Activated naive CD8-positive, alpha-beta T cell treated with anti-CD3 and anti-CD28 coated beads, Interleukin-2, amount 10 ng/mL, durations not matched to agents 7 days and 5 days (primary cell): ENCODE measurements at regions of chr7 and their contacts with region 1.

Region 1: DNA sequence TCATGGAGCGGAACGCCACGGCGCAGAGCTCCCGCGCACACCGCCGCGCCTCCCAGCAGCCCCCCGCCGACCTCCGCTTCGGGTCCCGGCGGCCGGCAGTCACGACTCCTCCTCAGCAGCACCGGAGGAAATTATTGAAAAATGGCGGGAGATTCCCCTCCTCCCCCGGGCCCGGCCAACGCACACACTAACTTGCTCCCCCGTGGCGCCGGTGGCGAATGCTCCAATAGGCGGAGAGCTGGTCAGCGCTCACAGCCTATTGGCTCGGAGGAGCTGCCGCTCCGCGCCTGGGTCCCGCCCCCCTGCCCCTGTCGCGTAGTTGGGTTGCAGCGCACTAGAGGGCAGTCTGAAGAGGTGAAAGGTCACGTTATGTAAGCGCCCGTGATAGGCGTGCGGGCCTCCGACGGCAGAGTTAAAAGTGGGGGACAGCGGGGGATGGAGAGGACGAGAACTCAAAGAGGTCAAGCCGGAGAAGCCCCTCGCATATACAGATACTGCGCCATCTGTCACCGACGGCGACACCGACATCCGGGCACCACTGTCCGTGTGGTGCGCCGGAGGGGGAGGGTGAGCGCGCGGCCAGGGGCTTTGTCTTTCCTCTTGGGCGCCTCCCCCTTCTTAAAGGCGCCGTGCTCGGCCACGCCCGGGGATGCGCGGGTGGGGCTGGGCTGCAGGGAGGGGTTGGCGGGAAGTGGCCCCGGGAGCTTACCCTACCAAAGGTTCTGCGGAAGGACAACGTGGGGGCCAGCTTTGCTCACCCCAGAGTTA is at the start of gene BAZ1B:
- DNase-seq: peak; percentile 94
- ATAC-seq: peak; percentile 88
- H3K4me3 Mint-ChIP-seq: peak within 1 kb of the TSS; percentile 95
- H3K27ac Mint-ChIP-seq: peak within 1 kb of the TSS; percentile 99
- H3K4me1 Mint-ChIP-seq: peaks cover 54% of the 10 kb centered on the region
- H3K27me3 Mint-ChIP-seq: no peaks in the 10 kb centered on the region
- total RNA-seq, gene BAZ1B: 90.5 to 93.0 TPM

Region 2: GRCh38 chr7:73433924-73434700 is 88.2 kb before region 1 on chr7:
- POLR2A ChIA-PET with region 1: no interaction called
- DNase-seq: no peak
- ATAC-seq: peak; percentile 16
- H3K4me3 Mint-ChIP-seq: peak overlapping the region; percentile 37
- H3K27ac Mint-ChIP-seq: no peak overlapping the region
- H3K4me1 Mint-ChIP-seq: peaks cover 3% of the 10 kb centered on the region
- H3K27me3 Mint-ChIP-seq: peaks cover 12% of the 10 kb centered on the region

Region 3: DNA sequence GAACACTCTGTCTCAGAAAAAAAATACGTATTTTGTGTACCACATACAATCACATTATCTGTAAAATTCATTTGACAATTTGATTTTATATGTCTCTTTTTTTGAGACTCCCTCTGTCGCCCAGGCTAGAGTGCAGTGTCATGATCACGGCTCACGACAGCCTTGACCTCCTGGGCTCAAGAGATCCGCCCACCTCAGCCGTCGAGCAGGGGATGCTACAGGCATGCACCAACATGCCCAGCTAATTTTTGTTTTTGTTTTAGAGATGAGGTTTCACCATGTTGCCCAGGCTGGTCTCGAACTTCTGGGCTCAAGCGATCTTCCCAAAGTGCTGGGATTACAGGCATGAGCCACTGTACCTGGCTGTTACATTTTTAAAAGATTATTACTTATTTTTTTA is 11.5 kb after region 1 on chr7:
- POLR2A ChIA-PET with region 1: interaction called, 12 read pairs
- DNase-seq: no peak
- ATAC-seq: no peak
- H3K4me3 Mint-ChIP-seq: no peak overlapping the region
- H3K27ac Mint-ChIP-seq: no peak overlapping the region
- H3K4me1 Mint-ChIP-seq: no peaks in the 10 kb centered on the region
- H3K27me3 Mint-ChIP-seq: no peaks in the 10 kb centered on the region

Region 4: DNA sequence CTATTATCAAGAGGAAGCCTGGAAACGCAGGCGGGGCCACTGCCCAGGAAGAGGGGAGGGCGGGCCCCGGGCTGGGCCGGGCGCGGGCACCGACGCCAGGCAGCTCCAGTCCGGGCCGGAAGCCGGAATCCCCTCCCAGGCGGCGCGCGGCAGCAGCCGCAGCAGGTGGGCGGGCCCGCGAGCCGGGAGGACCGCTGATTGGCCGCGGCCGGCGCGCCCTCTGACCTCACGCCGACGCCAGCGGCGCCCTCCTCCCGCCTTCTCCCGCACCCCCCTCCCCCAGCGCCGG is 34.8 kb after region 1 on chr7:
- POLR2A ChIA-PET with region 1: interaction called, 30 read pairs
- DNase-seq: peak; percentile 96
- ATAC-seq: peak; percentile 93
- H3K4me3 Mint-ChIP-seq: peak overlapping the region; percentile 94
- H3K27ac Mint-ChIP-seq: peak overlapping the region; percentile 98
- H3K4me1 Mint-ChIP-seq: peaks cover 30% of the 10 kb centered on the region
- H3K27me3 Mint-ChIP-seq: no peaks in the 10 kb centered on the region

Region 5: DNA sequence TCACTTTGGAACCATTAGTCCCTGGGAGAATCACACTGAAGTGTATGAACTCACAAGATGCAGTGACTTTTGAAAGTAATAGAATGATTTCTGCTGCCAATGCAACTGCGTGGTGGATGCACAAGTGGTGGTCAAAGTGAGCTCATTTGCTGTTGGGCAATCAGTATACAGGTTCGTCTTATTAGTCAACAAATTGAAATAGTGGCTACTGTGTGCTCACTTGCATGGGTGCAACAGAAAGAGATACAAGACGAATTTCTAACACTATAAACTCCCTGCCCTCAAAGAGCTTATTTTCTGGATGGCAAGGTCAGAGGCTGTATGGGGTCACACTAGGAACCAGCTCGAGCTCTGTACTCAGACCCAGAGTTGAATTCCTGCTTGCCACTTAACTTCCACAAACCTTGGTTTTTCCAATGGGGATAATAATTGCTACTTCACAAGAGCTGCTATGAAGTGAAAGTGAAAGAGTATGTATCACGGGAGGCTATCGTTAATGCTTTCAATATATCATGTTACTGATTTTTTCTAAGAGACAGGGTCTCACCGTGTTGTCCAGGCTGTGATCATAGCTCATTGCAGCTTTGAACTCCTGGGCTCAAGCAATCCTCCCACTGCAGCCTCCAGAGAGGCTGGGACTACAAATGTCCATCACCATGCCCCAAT is 43.5 kb after region 1 on chr7:
- POLR2A ChIA-PET with region 1: interaction called, 30 read pairs
- DNase-seq: no peak
- ATAC-seq: peak; percentile 46
- H3K4me3 Mint-ChIP-seq: peak overlapping the region; percentile 80
- H3K27ac Mint-ChIP-seq: peak overlapping the region; percentile 80
- H3K4me1 Mint-ChIP-seq: peaks cover 21% of the 10 kb centered on the region
- H3K27me3 Mint-ChIP-seq: no peaks in the 10 kb centered on the region

Region 6: DNA sequence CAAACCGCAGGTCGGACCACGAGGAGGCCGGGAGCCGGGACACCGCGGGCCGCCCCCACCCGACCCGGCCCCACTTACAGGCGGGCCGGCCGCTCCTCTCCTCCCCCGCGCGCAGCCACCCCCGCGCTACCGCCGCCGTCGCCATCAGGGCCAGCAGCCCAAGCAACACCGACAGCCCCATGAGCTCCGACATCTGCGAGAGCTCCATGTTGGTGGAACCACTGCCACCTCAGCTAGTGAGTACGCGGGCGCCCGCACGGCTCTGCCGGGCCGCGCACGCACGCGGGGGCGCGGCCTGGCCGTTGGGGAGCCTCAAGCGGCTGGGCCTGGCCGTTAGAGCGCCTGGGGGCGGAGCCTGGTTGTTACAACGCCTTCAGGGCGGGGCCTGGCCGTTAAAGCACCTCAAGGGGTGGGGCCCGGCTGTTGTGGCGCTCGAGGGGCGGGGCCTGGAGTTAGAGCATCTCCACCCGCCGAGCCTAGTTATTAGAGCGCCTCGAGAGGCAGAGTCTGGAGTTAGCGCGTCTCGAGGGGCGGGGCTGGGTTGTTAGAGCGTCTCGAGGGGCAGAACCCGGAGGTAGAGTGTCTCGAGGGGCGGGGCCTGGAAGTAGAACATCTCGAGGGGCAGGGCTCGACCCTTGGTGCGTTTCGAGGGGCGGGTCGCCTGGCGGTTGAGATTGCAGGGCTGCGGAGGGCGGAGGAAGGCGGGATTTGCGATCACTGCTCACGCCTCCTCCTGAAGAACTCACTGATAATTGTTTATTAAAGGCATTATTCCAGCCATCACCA is 56.2 kb after region 1 on chr7 and contains the start of gene TBL2:
- POLR2A ChIA-PET with region 1: interaction called, 26 read pairs
- DNase-seq: peak; percentile 99
- ATAC-seq: peak; percentile 95
- H3K4me3 Mint-ChIP-seq: peak within 1 kb of the TSS; percentile 91
- H3K27ac Mint-ChIP-seq: peak within 1 kb of the TSS; percentile 97
- H3K4me1 Mint-ChIP-seq: peaks cover 21% of the 10 kb centered on the region
- H3K27me3 Mint-ChIP-seq: no peaks in the 10 kb centered on the region
- total RNA-seq, gene TBL2: 21.3 to 25.0 TPM

Region 7: GRCh38 chr7:73610105-73610504 is 87.8 kb after region 1 on chr7:
- POLR2A ChIA-PET with region 1: no interaction called
- DNase-seq: no peak
- ATAC-seq: no peak
- H3K4me3 Mint-ChIP-seq: no peak overlapping the region
- H3K27ac Mint-ChIP-seq: no peak overlapping the region
- H3K4me1 Mint-ChIP-seq: no peaks in the 10 kb centered on the region
- H3K27me3 Mint-ChIP-seq: peaks cover 46% of the 10 kb centered on the region

Region 8: DNA sequence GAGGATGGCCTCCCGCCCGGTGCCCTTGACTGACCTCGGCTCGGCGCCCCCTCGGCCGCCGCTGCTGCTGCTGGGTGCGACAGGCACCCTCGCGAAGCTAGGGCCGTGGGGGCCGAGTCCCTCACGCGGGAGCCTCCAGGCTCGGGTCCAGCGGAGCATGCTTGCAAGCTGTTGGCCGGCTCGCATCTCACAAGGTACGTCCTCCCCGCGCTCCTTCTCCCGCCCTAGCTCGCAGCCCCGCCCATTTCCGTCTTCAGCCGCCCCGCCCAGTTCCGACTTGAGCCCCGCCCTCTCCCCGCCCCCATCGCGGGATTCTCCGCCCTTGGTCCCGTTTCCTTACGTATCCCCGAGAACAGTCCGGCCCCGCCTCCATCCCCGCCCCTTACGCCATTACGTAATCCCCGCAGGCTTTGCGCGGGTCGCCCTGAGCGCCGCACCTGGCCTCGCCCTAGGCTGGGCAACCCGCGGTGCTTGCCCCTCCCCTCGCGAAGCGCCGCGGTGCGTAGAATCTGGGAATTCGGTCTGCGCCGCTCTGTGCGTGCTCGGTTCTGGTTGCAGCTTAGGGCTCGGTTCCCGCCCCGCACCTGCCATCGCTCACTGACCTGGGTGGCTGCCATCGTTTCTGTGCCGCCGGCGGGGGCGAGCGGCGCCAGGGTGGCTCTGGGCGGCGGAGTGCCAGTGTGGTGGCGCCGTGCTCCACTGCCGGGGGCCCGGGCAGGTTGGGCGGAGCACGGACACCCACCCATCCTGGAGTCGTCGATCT is 216.5 kb after region 1 on chr7 and contains the start of gene ABHD11:
- POLR2A ChIA-PET with region 1: interaction called, 10 read pairs
- DNase-seq: peak; percentile 98
- ATAC-seq: peak; percentile 79
- H3K4me3 Mint-ChIP-seq: peak within 1 kb of the TSS; percentile 97
- H3K27ac Mint-ChIP-seq: peak within 1 kb of the TSS; percentile 98
- H3K4me1 Mint-ChIP-seq: peaks cover 16% of the 10 kb centered on the region
- H3K27me3 Mint-ChIP-seq: peaks cover 2% of the 10 kb centered on the region
- total RNA-seq, gene ABHD11: 23.4 to 24.7 TPM